T-cell (primary cell): ENCODE measurements at regions of chr12 and their contacts with region 1.

Region 1: DNA sequence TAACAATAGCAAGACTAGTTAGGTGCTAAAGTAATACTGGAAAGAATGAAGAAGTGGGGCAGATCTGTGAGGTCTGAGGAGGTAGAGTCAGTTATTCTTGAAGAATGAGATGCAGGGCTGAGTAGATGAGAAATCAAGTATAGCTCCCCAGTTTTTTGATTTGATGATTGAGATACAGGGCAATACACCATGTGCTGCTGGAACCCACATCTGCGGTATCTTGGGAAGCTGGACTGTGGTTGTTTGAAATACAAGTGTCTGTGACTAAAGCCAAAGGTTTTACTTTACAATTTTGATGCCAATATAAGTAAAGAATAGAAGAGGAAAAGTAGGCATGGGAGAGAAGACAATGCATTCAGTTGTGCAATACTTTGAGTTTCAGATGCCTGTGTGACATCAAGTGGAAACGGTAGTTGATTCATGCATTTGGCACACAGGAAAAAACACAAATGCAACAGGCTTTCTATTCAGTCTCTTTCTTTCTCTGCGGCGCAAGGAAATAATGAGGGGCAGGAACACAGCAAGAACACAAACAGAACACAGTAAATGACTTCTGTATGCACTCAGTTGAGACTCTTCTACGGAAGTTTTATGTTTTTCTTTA is 190.2 kb upstream of the SLC38A2 start:
- DNase-seq: no peak
- ATAC-seq: no peak
- H3K4me3 ChIP-seq: no peak overlapping the region
- H3K4me3 Mint-ChIP-seq: no peak overlapping the region
- H3K27ac ChIP-seq: no peak overlapping the region
- H3K27ac Mint-ChIP-seq: no peak overlapping the region
- H3K4me1 ChIP-seq: peaks cover 0 to 5% of the 10 kb centered on the region in 2 experiments
- H3K4me1 Mint-ChIP-seq: peaks cover 0 to 7% (median 4%) of the 10 kb centered on the region in 3 donors
- H3K27me3 ChIP-seq: no peaks in the 10 kb centered on the region
- H3K27me3 Mint-ChIP-seq: no peaks in the 10 kb centered on the region

Region 2: DNA sequence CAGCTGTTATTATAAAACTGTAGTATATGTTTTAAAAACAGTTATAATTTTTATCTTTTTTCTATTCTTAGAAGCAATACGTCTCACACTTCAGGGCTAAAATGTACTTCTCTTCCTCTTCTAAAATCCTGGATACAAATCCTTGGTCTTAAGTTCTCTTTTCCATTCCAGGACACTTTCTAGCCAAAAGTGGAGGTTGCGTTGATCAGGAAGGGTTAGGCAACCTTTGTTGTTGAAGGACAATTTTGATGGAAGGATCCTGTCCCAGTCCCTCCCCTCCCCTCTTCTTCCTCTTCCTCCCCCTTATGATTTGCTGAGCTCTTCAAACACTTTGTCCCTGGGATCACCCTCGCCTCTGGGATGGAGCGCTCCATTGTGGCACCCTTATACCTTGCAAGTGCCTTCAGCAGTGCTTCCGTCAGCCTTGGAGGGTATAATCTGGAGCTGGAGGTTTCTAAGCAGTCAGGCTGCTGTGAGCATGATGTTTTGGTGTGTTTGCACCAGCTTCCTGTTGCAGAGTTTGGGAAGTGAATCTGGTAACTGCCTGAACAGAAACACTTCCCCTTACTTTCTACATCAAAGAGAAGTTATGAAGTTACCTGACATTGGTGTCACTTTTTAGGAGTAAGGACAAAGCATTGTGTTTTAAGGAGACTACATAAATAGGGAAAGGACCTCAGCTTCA is 102.7 kb before region 1 on chr12:
- CTCF ChIA-PET with region 1: no interaction called
- POLR2A ChIA-PET with region 1: no interaction called
- DNase-seq: peak in 13 of 35 experiments; percentile 1 to 33 (median 13)
- ATAC-seq: peak; percentile 47 to 70 (median 54)
- H3K4me3 ChIP-seq: peak overlapping the region in 1 of 2 donors; percentile 57
- H3K4me3 Mint-ChIP-seq: peak overlapping the region; percentile 64 to 80 (median 69)
- H3K27ac ChIP-seq: peak overlapping the region; percentile 15
- H3K27ac Mint-ChIP-seq: peak overlapping the region; percentile 98 to 100
- H3K4me1 ChIP-seq: peaks cover 32 to 43% of the 10 kb centered on the region in 2 experiments
- H3K4me1 Mint-ChIP-seq: peaks cover 56 to 67% (median 59%) of the 10 kb centered on the region in 3 donors
- H3K27me3 ChIP-seq: no peaks in the 10 kb centered on the region
- H3K27me3 Mint-ChIP-seq: no peaks in the 10 kb centered on the region

Region 3: GRCh38 chr12:46470975-46471374 is 91.8 kb before region 1 on chr12:
- CTCF ChIA-PET with region 1: no interaction called
- POLR2A ChIA-PET with region 1: interaction called in 1 of 2 experiments, 16 read pairs
- DNase-seq: no peak
- ATAC-seq: no peak
- H3K4me3 ChIP-seq: no peak overlapping the region
- H3K4me3 Mint-ChIP-seq: no peak overlapping the region
- H3K27ac ChIP-seq: no peak overlapping the region
- H3K27ac Mint-ChIP-seq: no peak overlapping the region
- H3K4me1 ChIP-seq: peaks cover 5% of the 10 kb centered on the region in 2 experiments
- H3K4me1 Mint-ChIP-seq: peaks cover 21 to 24% (median 22%) of the 10 kb centered on the region in 3 donors
- H3K27me3 ChIP-seq: no peaks in the 10 kb centered on the region
- H3K27me3 Mint-ChIP-seq: no peaks in the 10 kb centered on the region